ENCODE measurements at regions of chr17 and their contacts with region 1.

Region 1: DNA sequence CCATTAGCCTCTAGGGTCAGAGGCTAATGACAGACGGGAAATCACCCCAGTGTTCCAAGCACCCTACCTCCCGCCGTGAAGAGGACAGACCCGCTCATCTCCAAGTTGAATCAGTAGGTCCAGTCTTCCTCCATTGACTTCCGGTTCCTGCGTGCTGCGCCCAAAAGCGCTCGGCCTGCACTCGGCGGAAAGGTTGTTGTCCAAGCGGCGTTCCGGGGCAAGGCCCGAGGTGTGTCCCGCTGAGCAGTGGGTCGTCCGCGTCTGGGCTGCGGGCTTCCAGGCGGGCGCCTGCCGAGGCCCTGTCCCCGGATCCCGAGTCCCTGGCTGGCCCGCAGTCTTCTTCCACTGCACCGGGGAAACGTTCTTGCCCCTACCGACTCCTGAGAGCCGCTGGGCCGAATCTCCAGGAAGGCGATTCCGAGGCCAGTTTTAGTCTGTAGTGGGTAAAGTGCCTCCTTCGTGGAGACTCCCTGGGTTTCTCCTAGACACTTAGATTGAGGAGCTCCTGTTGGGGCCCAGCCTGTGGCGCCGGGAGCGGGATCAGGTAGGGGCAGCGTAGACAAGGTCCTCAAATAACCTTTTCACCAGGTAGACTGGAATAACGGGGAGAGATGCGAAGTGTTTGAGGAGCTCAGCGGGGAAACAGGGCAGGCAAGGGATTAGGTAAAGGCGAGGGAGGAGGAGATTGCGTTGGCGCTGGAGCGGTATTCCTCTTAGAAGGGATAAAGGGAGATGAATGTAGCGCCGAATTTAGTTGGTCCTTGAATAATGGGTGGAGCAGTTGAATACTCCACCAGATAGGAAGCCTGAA is at the start of gene TEFM:
- DNase-seq: peak; percentile 93
- H3K4me3 Mint-ChIP-seq: peak within 1 kb of the TSS; percentile 99
- H3K27ac Mint-ChIP-seq: peak within 1 kb of the TSS; percentile 94
- H3K4me1 Mint-ChIP-seq: peaks cover 53% of the 10 kb centered on the region
- H3K27me3 Mint-ChIP-seq: no peaks in the 10 kb centered on the region
- total RNA-seq, gene TEFM: 8.6 to 9.7 TPM

Region 2: GRCh38 chr17:30477083-30477773 is 429.1 kb before region 1 on chr17 and contains the start of gene GOSR1:
- CTCF ChIA-PET with region 1: no interaction called
- intact Hi-C with region 1: loop called (anchors 2 kb)
- DNase-seq: peak; percentile 97
- H3K4me3 Mint-ChIP-seq: peak within 1 kb of the TSS; percentile 98
- H3K27ac Mint-ChIP-seq: peak within 1 kb of the TSS; percentile 97
- H3K4me1 Mint-ChIP-seq: peaks cover 36% of the 10 kb centered on the region
- H3K27me3 Mint-ChIP-seq: peaks cover 2% of the 10 kb centered on the region
- total RNA-seq, gene GOSR1: 33.9 to 37.3 TPM

Region 3: DNA sequence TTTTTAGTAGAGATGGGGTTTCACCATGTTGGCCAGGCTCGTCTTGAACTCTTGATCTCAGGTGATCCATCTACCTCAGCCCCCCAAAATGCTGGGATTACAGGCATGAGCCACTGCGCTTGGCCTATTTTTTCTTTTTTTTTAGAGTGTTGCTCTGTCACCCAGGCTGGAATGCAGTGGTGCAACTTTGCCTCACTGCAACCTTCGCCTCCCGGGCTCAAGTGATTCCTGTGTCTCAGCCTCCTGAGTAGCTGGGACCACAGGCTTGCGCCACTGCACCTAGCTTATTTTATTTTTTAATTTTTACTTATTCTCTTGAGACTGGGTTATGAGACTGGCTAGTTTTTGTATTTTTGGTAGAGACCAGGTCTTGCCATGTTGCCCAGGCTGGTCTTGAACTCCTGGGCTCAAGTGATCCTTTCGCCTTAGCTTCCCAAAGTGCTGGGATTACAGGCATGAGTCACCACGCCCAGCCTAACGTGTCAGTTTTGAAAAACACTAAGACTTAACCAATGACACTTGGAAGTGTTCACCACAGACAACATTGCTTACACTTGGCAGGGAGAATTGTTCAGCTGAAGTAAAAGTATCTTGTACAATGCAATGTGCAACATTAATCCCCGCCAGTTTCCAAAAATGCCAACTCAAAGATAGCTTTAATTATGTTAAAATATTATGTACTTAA is 47.6 kb before region 1 on chr17:
- CTCF ChIA-PET with region 1: no interaction called
- intact Hi-C with region 1: no loop called
- DNase-seq: no peak
- H3K4me3 Mint-ChIP-seq: no peak overlapping the region
- H3K27ac Mint-ChIP-seq: no peak overlapping the region
- H3K4me1 Mint-ChIP-seq: no peaks in the 10 kb centered on the region
- H3K27me3 Mint-ChIP-seq: no peaks in the 10 kb centered on the region

Region 4: GRCh38 chr17:30970831-30971567 is 64.7 kb after region 1 on chr17 and contains the start of gene RNF135:
- CTCF ChIA-PET with region 1: no interaction called
- intact Hi-C with region 1: loop called (anchors 1 kb)
- DNase-seq: peak; percentile 60
- H3K4me3 Mint-ChIP-seq: peak within 1 kb of the TSS; percentile 88
- H3K27ac Mint-ChIP-seq: peak within 1 kb of the TSS; percentile 79
- H3K4me1 Mint-ChIP-seq: peaks cover 31% of the 10 kb centered on the region
- H3K27me3 Mint-ChIP-seq: peaks cover 9% of the 10 kb centered on the region
- total RNA-seq, gene RNF135: 5.0 to 5.4 TPM

Region 5: DNA sequence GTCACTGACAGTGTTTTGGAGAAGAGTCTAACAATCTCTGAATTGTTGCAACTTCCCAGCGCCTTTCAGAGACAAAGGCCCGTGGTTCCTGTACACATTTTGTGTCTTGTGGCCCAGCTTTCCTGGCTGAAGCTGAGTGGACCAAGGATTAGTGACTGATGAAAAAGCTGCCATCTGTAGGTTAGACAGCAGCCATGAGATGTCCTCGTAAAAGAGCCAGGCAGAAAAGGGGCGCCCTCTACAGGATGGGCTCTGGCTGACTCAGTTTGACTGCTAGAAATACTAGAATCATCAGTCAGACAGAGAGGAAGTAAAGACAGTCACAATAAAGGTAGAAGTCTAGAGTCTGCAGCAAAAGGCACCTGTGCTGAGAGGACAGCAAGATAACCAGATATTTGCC is 162.0 kb after region 1 on chr17:
- CTCF ChIA-PET with region 1: no interaction called
- intact Hi-C with region 1: loop called (anchors 10 kb)
- DNase-seq: peak; percentile 83
- H3K4me3 Mint-ChIP-seq: no peak overlapping the region
- H3K27ac Mint-ChIP-seq: no peak overlapping the region
- H3K4me1 Mint-ChIP-seq: peaks cover 2% of the 10 kb centered on the region
- H3K27me3 Mint-ChIP-seq: no peaks in the 10 kb centered on the region

Region 6: GRCh38 chr17:31216053-31216751 is 309.9 kb after region 1 on chr17:
- CTCF ChIA-PET with region 1: no interaction called
- intact Hi-C with region 1: loop called (anchors 5 kb)
- DNase-seq: no peak
- H3K4me3 Mint-ChIP-seq: no peak overlapping the region
- H3K27ac Mint-ChIP-seq: no peak overlapping the region
- H3K4me1 Mint-ChIP-seq: no peaks in the 10 kb centered on the region
- H3K27me3 Mint-ChIP-seq: no peaks in the 10 kb centered on the region

Region 7: DNA sequence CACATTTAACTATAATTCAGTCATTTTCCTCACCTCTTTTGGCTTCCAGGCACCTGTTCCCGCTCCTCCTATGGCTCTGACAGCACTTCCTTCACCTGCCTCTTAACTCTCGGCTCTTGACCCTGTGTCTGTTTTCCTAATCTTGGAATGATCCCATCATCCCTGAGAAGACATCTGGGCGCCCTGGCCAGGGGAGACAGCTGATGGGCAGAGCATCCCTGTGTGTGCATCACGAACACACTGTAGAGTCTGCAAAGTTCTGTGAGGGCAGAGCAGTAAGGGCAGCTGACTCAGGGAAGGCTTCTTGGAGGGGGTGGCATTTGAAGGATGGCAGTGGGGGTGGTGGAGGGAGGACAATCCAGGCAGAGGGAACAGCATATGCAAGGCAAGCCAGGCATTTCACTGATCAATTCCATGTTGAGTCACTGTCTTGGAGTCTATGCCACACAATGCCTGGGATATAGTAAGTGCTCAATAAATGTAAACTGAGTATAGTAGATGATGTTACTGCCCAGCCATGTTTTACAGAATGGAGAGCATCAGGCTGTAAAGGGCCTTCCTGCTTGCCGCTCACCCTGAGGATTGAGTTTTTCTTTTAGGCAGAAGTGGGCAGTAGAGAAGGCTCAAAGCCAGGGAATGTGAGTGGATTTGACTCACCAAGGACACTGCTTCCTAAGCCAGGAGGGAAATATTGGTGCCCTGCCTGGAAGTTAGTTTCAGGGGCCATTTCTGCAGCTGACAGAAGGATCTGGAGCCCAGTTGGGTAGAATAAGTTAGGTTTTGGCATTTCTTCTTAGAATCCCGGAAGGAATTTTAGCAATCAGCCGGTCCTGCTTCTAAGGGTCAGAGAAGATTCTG is 479.4 kb after region 1 on chr17:
- CTCF ChIA-PET with region 1: no interaction called
- intact Hi-C with region 1: no loop called
- DNase-seq: no peak
- H3K4me3 Mint-ChIP-seq: no peak overlapping the region
- H3K27ac Mint-ChIP-seq: no peak overlapping the region
- H3K4me1 Mint-ChIP-seq: no peaks in the 10 kb centered on the region
- H3K27me3 Mint-ChIP-seq: peaks cover 13% of the 10 kb centered on the region

Measured in activated naive CD4-positive, alpha-beta T cell treated with anti-CD3 and anti-CD28 coated beads for 36 hours (primary cell).